Activated CD8-positive, alpha-beta T cell treated with anti-CD3 and anti-CD28 coated beads for 36 hours (primary cell): ENCODE measurements at regions of chr2 and their contacts with region 1.

Region 1: GRCh38 chr2:189287982-189288521 is 108.5 kb upstream of the COL5A2 start:
- DNase-seq: no peak
- ATAC-seq: peak; percentile 65
- H3K4me3 Mint-ChIP-seq: no peak overlapping the region
- H3K27ac Mint-ChIP-seq: peak overlapping the region; percentile 75
- H3K4me1 Mint-ChIP-seq: peaks cover 62% of the 10 kb centered on the region
- H3K27me3 Mint-ChIP-seq: no peaks in the 10 kb centered on the region
- CTCF ChIP-seq: peak; percentile 42

Region 2: GRCh38 chr2:189096769-189097447 is 191.1 kb before region 1 on chr2:
- CTCF ChIA-PET with region 1: interaction called, 11 read pairs
- POLR2A ChIA-PET with region 1: no interaction called
- intact Hi-C with region 1: no loop called
- DNase-seq: no peak
- ATAC-seq: no peak
- H3K4me3 Mint-ChIP-seq: no peak overlapping the region
- H3K27ac Mint-ChIP-seq: no peak overlapping the region
- H3K4me1 Mint-ChIP-seq: no peaks in the 10 kb centered on the region
- H3K27me3 Mint-ChIP-seq: no peaks in the 10 kb centered on the region
- CTCF ChIP-seq: no peak

Region 3: GRCh38 chr2:189115126-189115525 is 172.9 kb before region 1 on chr2:
- CTCF ChIA-PET with region 1: interaction called, 9 read pairs
- POLR2A ChIA-PET with region 1: no interaction called
- intact Hi-C with region 1: loop called (anchors 5 kb)
- DNase-seq: no peak
- ATAC-seq: no peak
- H3K4me3 Mint-ChIP-seq: no peak overlapping the region
- H3K27ac Mint-ChIP-seq: no peak overlapping the region
- H3K4me1 Mint-ChIP-seq: peaks cover 19% of the 10 kb centered on the region
- H3K27me3 Mint-ChIP-seq: no peaks in the 10 kb centered on the region
- CTCF ChIP-seq: peak; percentile 20

Region 4: GRCh38 chr2:189305291-189305943 is 17.4 kb after region 1 on chr2:
- CTCF ChIA-PET with region 1: interaction called, 14 read pairs
- POLR2A ChIA-PET with region 1: interaction called, 3 read pairs
- intact Hi-C with region 1: no loop called
- DNase-seq: no peak
- ATAC-seq: no peak
- H3K4me3 Mint-ChIP-seq: no peak overlapping the region
- H3K27ac Mint-ChIP-seq: peak overlapping the region; percentile 95
- H3K4me1 Mint-ChIP-seq: peaks cover 60% of the 10 kb centered on the region
- H3K27me3 Mint-ChIP-seq: no peaks in the 10 kb centered on the region
- CTCF ChIP-seq: no peak

Region 5: DNA sequence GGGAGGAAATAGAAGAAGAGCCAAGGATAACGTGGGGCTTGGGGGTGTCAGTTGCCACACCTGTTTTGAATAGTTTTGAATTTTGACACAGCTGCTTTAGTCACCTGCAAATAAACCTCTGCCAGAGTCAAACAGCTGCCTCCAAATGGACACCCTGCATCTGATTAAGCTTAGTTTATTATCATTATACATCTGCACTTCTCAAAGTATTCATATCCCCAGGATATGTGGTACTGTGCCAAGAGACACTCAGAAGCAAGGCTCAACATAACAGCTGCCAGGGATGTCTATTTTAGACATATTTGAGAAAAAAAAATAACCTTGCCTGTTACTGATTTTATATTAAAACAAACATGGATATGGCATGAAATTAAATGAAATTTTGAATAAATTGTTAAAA is 30.7 kb after region 1 on chr2:
- CTCF ChIA-PET with region 1: no interaction called
- POLR2A ChIA-PET with region 1: no interaction called
- intact Hi-C with region 1: no loop called
- DNase-seq: no peak
- ATAC-seq: no peak
- H3K4me3 Mint-ChIP-seq: no peak overlapping the region
- H3K27ac Mint-ChIP-seq: no peak overlapping the region
- H3K4me1 Mint-ChIP-seq: peaks cover 6% of the 10 kb centered on the region
- H3K27me3 Mint-ChIP-seq: no peaks in the 10 kb centered on the region
- CTCF ChIP-seq: no peak